Colonic mucosa (tissue), 4 donors: ENCODE measurements at regions of chr7 and their contacts with region 1.

Region 1: DNA sequence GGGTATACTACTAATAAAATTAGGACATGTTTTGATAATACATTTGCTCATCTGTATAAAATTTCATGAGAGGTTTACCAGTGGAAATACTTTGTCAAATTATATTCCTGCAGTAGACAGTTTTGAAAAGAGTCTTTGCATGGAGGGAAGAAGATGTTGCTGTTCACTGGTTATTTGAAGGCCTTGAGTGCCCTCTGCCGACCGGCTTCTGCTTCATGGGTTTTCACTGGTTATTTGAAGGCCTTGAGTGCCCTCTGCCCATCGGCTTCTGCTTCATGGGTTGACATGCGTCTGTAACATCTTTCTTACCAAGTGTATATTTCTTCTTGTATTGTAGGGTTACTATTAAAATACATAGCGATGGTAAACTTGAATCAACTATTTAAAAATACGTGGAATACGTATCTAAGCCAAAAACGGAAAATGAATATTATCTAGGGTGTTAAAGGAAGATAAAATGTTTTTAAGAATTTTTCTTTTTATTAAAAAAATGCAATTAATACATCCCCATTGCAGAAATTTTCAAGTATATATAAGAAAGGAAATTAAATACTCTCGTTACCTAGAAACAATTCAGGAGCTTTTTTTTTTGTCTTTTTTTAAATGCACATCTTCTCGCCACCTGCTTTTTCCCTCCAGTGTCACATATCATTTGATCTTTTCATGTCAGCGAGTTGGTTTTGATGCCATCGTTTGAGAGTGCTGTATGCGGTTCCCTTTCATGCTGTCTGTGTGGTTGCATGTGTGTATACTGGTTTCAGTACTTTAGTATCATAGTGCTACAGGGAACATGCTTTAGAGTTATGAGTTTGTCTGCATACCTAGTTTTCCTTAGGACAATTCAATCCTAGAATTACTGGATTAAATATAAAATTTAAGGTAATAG is 73.4 kb downstream of the SHH start:
- DNase-seq: peak; percentile 81
- H3K4me3 ChIP-seq: no peak overlapping the region
- H3K27ac ChIP-seq: no peak overlapping the region
- H3K4me1 ChIP-seq: peaks cover 3% of the 10 kb centered on the region
- H3K27me3 ChIP-seq: no peaks in the 10 kb centered on the region
- CTCF ChIP-seq: peak; percentile 68

Region 2: GRCh38 chr7:155598810-155599210 is 140.1 kb before region 1 on chr7:
- intact Hi-C with region 1: loop called (anchors 2 kb)
- DNase-seq: peak; percentile 91
- H3K4me3 ChIP-seq: no peak overlapping the region
- H3K27ac ChIP-seq: no peak overlapping the region
- H3K4me1 ChIP-seq: no peaks in the 10 kb centered on the region
- H3K27me3 ChIP-seq: no peaks in the 10 kb centered on the region
- CTCF ChIP-seq: peak; percentile 98